K562 (cell line): ENCODE measurements at regions of chr5 and their contacts with region 1.

Region 1: GRCh38 chr5:82466986-82467561 is 188.9 kb upstream of the RPS23 start:
- DNase-seq: peak in 2 of 4 experiments; percentile 18 to 61
- ATAC-seq: peak; percentile 78
- H3K4me3 ChIP-seq: no peak overlapping the region
- H3K27ac ChIP-seq: peak overlapping the region; percentile 69; the same call in 1 of the 3 replicates
- H3K4me1 ChIP-seq: peaks cover 0 to 7% of the 10 kb centered on the region in 2 experiments; a peak in 1 of 5 replicates
- H3K27me3 ChIP-seq: no peaks in the 10 kb centered on the region
- CTCF ChIP-seq: peak; percentile 25 to 40 (median 36); a peak in 3 of 6 replicates
- EP300 ChIP-seq: 0 out of 2 replicates have a peak, but pooled peaks have one; percentile 17
- POLR2A ChIP-seq: no peak
- RAD21 ChIP-seq: peak; percentile 16 to 50; a peak in 2 of 4 replicates

Region 2: DNA sequence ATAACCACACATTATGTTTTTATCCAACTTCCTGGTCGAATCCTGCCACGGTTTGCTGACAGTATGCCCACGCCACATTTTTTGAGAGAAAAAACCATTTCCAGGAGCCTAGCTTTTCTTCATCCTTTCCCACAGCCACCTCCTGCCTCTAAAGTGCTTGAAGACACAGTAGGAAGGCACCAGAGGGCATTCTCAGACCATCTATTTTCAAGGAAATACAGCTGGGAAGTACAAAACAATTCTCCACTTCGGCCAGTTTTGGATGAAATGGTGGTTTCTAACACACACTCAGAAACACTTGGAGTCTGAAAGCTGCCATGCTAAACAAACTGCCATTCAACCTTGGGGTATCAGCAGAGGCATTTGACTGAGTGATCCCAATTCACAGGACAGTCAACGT is 102.6 kb before region 1 on chr5:
- CTCF ChIA-PET with region 1: no interaction called
- POLR2A ChIA-PET with region 1: no interaction called
- in situ Hi-C with region 1: no loop called
- intact Hi-C with region 1: loop called (anchors 2 kb)
- DNase-seq: peak in 2 of 4 experiments; percentile 33 to 63
- ATAC-seq: peak; percentile 86
- H3K4me3 ChIP-seq: no peak overlapping the region
- H3K27ac ChIP-seq: no peak overlapping the region
- H3K4me1 ChIP-seq: peaks cover 8 to 14% of the 10 kb centered on the region in 2 experiments; a peak in 4 of 5 replicates
- H3K27me3 ChIP-seq: no peaks in the 10 kb centered on the region
- CTCF ChIP-seq: peak; percentile 46 to 71 (median 58); a peak in 5 of 6 replicates
- EP300 ChIP-seq: no peak
- POLR2A ChIP-seq: no peak
- RAD21 ChIP-seq: peak; percentile 85 to 92